Activated CD4-positive, alpha-beta T cell treated with anti-CD3 and anti-CD28 coated beads for 36 hours (primary cell): ENCODE measurements at regions of chr6 and their contacts with region 1.

Region 1: GRCh38 chr6:43667245-43668150 is 20.1 kb downstream of the MRPS18A start:
- DNase-seq: peak; percentile 87
- ATAC-seq: peak; percentile 53
- H3K4me3 Mint-ChIP-seq: peak overlapping the region; percentile 43
- H3K27ac Mint-ChIP-seq: peak overlapping the region; percentile 77
- H3K4me1 Mint-ChIP-seq: peaks cover 44% of the 10 kb centered on the region
- H3K27me3 Mint-ChIP-seq: no peaks in the 10 kb centered on the region

Region 2: DNA sequence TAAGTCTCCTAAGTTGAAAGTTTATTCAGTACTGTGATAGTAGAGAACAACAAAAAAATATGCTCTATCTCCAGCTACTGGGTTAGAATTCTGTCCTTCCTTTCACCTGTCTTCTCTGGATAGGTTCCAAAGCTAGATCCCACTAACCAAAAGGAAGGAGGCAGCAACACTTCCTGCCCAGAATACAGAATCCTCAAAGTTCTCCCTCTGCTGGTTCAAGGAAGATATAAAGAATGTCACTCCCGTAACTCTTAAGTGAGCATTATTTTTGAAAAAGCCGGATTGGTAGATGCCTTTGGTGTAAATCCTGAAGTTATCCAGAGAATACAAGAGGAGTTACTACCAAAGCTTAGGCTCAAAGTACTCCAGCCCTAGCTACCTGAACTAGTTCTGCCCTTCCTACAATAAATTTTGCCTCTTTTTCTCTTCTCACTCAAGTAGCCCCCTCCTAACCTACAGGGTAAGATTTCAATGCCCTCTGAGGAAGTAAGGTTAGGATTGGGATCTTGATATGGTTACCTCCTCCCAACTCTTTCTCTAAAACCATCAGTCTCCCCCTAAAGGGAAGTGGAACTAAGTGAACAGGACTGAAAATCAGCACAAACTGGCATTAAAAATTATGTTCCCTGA is 332.9 kb before region 1 on chr6:
- CTCF ChIA-PET with region 1: no interaction called
- POLR2A ChIA-PET with region 1: no interaction called
- intact Hi-C with region 1: no loop called
- DNase-seq: no peak
- ATAC-seq: no peak
- H3K4me3 Mint-ChIP-seq: no peak overlapping the region
- H3K27ac Mint-ChIP-seq: no peak overlapping the region
- H3K4me1 Mint-ChIP-seq: peaks cover 25% of the 10 kb centered on the region
- H3K27me3 Mint-ChIP-seq: no peaks in the 10 kb centered on the region

Region 3: DNA sequence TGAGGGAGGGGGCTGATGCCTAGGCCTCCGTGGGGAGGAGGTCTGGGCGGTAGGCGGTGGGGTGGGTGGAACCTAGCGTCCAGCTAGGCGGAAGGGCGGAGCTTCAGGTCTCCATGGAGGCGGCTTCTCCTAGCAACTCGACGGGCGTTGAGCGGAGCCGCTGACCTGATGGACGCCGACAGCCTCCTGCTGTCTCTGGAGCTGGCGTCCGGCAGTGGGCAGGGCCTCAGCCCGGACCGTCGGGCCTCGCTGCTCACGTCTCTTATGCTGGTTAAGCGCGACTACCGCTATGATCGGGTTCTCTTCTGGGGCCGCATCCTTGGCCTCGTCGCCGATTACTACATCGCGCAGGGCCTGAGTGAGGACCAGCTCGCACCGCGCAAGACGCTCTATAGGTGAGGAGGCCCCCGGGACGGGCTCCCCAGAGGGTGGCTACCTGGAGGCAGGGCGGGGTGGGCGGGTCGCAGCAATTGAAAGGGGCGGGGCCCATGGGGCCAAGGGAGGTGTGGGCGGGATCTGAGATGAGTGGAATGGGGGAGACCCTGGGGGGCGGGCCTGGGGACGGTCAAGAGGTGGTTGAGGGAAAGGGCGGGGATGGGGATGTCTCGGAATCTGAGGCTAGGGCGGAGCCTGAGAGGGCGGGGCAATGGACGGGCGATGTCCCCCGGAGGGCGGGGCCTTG is 22.4 kb before region 1 on chr6 and contains the start of gene RSPH9:
- CTCF ChIA-PET with region 1: interaction called, 10 read pairs
- POLR2A ChIA-PET with region 1: interaction called, 4 read pairs
- intact Hi-C with region 1: no loop called
- DNase-seq: peak; percentile 86
- ATAC-seq: peak; percentile 92
- H3K4me3 Mint-ChIP-seq: peak within 1 kb of the TSS; percentile 71
- H3K27ac Mint-ChIP-seq: peak within 1 kb of the TSS; percentile 77
- H3K4me1 Mint-ChIP-seq: peaks cover 13% of the 10 kb centered on the region
- H3K27me3 Mint-ChIP-seq: no peaks in the 10 kb centered on the region
- total RNA-seq, gene RSPH9: not detected

Region 4: DNA sequence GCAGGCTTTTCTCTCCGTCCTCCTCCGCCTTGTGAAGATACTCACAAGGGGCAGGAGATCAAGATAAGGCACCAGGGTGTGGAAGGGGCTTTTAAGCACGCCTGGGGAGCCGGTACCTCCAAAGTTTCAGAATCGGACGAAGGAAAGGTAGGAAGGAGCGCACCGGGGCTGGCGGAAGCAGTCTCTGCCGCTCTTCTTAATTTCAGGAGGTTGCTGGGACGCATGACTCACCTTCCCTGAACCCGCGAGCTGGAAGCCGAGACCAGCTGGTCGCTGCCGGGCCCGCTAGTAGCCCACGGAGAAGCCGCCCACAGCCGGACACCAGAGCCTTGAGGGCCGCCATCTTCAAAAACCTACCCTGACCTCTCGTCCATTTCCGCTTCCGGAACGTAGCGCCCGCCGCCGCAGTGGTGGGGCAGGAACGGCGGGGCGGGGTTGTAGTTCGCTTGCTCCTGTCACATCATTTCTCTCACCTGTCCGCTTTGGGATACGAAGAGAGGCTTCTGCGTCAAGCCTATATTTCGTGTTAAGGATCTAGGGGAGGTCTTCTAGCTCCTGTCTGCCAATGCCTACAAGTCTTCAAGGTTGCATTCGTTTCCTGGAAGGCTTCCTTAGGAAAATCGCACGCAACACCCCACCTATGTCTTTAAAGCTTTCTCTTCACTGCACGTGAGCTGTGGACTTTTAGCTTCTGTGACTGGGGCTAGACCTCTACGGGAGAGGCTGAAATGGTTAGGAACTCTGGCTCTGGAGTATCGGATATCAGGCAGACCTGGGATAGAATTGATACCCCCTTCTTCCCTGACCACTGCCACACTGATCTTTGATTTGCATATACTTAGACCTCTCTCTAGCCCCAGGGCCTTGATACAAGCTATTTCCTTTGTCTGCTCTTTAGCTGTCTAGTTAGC is 20.2 kb after region 1 on chr6 and contains the start of gene MRPS18A:
- CTCF ChIA-PET with region 1: interaction called, 39 read pairs
- POLR2A ChIA-PET with region 1: no interaction called
- intact Hi-C with region 1: loop called in 1 of 2 experiments (anchors 1 kb)
- DNase-seq: peak; percentile 91
- ATAC-seq: peak; percentile 99
- H3K4me3 Mint-ChIP-seq: peak within 1 kb of the TSS; percentile 90
- H3K27ac Mint-ChIP-seq: peak within 1 kb of the TSS; percentile 89
- H3K4me1 Mint-ChIP-seq: peaks cover 40% of the 10 kb centered on the region
- H3K27me3 Mint-ChIP-seq: no peaks in the 10 kb centered on the region
- total RNA-seq, gene MRPS18A: 54.0 to 68.7 TPM

Region 5: GRCh38 chr6:43758617-43759050 is 91.1 kb after region 1 on chr6:
- CTCF ChIA-PET with region 1: interaction called, 4 read pairs
- POLR2A ChIA-PET with region 1: no interaction called
- intact Hi-C with region 1: loop called in 1 of 2 experiments (anchors 1 kb)
- DNase-seq: peak; percentile 64
- ATAC-seq: peak; percentile 81
- H3K4me3 Mint-ChIP-seq: no peak overlapping the region
- H3K27ac Mint-ChIP-seq: no peak overlapping the region
- H3K4me1 Mint-ChIP-seq: no peaks in the 10 kb centered on the region
- H3K27me3 Mint-ChIP-seq: peaks cover 6% of the 10 kb centered on the region

Region 6: DNA sequence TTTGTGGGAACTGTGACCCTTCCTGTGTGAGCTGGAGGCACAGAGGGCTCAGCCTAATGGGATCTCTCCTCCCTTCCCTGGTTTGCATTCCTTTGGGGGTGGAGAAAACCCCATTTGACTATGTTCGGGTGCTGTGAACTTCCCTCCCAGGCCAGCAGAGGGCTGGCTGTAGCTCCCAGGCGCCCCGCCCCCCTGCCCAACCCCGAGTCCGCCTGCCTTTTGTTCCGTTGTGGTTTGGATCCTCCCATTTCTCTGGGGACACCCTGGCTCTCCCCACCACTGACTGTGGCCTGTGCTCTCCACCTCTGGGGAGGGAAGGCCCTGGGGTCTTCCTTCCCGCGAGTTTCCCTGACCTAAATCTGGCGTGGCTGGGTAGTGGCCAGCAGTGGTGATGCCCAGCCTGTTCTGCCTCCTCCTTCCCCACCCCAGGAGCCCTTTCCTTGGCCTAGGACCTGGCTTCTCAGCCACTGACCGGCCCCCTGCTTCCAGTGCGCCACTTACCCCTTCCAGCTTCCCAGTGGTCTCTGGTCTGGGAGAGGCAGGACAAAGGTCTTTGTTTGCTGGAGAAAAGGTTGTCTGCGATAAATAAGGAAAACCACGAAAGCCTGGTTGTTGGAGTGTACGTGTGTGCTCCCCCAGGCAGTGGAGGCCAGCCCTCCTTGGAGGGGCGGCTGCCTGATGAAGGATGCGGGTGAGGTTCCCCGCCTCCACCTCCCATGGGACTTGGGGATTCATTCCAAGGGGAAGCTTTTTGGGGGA is 107.5 kb after region 1 on chr6:
- CTCF ChIA-PET with region 1: interaction called, 20 read pairs
- POLR2A ChIA-PET with region 1: no interaction called
- intact Hi-C with region 1: loop called (anchors 1 to 5 kb)
- DNase-seq: peak; percentile 81
- ATAC-seq: no peak
- H3K4me3 Mint-ChIP-seq: peak overlapping the region; percentile 16
- H3K27ac Mint-ChIP-seq: no peak overlapping the region
- H3K4me1 Mint-ChIP-seq: peaks cover 23% of the 10 kb centered on the region
- H3K27me3 Mint-ChIP-seq: peaks cover 4% of the 10 kb centered on the region

Region 7: DNA sequence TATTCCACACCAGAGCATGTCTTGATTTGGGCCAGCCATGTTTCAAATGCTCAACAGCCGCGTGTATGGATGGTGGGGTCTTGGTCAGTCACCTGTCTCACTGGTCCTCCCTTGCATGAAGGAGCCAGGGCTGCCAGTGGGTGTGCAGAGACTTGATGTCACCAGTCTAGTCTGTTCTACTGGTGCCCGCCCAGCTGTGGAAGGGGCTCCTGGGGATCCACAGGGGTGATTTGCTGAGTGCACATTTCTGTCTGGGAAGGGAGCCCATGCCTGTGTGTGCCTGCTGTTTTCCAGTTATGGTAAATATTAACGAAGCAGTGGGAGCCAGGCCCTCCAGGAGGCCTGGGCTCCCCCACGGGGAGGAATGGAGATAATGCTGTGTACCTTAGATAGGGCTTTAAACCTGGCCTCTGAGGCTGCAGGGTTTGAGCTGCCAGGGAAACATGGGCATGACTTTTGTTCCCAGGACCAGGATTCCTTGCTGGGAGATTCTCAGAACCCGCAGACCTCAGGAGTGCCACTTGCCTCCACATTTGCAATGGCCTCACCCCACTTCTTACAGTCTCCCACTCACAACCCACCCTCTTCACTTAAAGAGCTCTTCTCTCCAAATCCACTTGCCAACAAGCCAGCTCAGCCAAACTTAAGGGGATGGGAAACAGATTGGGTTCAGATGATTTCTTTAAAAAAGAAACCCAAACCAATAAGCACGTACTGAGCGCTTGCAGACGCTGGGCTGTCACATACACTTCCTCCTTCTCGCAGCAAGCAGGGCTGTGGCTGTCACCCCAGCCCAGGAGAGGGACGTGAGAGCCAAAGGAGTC is 156.6 kb after region 1 on chr6:
- CTCF ChIA-PET with region 1: no interaction called
- POLR2A ChIA-PET with region 1: no interaction called
- intact Hi-C with region 1: no loop called
- DNase-seq: no peak
- ATAC-seq: no peak
- H3K4me3 Mint-ChIP-seq: no peak overlapping the region
- H3K27ac Mint-ChIP-seq: no peak overlapping the region
- H3K4me1 Mint-ChIP-seq: no peaks in the 10 kb centered on the region
- H3K27me3 Mint-ChIP-seq: no peaks in the 10 kb centered on the region

Region 8: DNA sequence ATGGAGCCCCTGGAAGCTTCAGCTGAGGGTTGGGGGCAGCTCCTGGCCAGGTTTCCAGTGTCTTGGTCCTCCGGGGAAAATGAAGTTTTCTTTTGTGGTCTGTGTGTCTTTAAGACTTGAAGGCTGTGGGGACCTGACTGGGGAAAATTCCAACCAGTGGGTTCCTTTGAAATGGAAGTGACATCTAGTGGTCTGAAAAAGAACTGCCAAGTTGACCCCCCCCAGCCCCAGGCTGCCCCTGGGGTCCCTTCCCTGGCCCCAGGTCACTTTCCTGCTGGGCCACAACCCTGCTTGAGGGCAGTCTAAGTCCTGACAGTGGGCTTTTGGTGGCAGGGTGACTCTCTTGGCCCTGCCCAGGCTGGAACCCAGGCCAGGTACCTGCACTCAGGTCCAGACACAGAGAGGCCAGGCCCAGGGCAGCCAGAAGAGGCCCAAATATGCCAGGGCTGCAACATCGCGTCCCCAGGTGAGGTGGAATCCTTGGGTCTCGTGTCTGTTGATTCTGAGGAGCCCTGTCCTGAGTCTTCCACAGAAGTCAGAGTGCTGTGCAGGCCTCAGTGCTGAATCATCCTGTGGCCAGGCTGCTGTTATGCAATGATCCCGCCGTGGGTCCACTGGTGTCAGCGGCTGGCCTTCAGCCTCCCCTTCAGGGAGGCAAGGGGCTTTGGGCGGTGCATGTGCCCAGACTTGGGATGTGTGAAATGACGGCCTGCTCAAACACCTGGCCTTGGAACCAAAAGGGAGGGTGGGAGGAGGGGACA is 171.0 kb after region 1 on chr6:
- CTCF ChIA-PET with region 1: no interaction called
- POLR2A ChIA-PET with region 1: no interaction called
- intact Hi-C with region 1: loop called in 1 of 2 experiments (anchors 2 kb)
- DNase-seq: peak; percentile 38
- ATAC-seq: peak; percentile 61
- H3K4me3 Mint-ChIP-seq: no peak overlapping the region
- H3K27ac Mint-ChIP-seq: no peak overlapping the region
- H3K4me1 Mint-ChIP-seq: no peaks in the 10 kb centered on the region
- H3K27me3 Mint-ChIP-seq: peaks cover 3% of the 10 kb centered on the region